Activated CD4-positive, alpha-beta T cell treated with anti-CD3 and anti-CD28 coated beads for 36 hours (primary cell): ENCODE measurements at regions of chr5 and their contacts with region 1.

Region 1: DNA sequence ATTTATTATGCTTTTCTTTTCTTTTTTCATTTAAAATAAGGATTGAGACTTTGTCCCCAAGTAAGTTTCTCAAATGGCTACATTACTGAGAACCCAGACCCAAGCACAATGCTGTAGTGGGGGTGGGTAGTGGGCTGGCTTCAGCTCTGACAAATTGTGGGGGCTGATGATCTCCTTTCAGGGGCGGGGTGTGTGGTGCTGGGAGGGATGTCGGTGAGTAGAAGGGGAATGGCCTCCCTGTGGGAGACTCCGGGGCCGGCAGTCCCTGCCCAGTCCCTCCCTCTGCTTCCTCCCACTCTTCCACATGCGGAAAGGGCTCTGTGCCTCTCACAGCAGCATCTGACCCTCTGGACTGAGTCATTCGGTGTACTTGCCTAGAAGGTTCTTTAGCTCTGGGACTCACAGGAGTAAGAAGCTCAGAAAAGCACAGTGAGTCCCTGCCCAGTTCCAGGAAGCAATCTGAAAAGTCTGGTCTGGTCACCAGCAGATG is 14.3 kb downstream of the CD180 start:
- DNase-seq: no peak
- ATAC-seq: peak; percentile 30
- H3K4me3 Mint-ChIP-seq: no peak overlapping the region
- H3K27ac Mint-ChIP-seq: no peak overlapping the region
- H3K4me1 Mint-ChIP-seq: peaks cover 37% of the 10 kb centered on the region
- H3K27me3 Mint-ChIP-seq: no peaks in the 10 kb centered on the region

Region 2: GRCh38 chr5:67133776-67134175 is 48.6 kb before region 1 on chr5:
- CTCF ChIA-PET with region 1: no interaction called
- POLR2A ChIA-PET with region 1: no interaction called
- intact Hi-C with region 1: loop called in 1 of 2 experiments (anchors 1 kb)
- DNase-seq: no peak
- ATAC-seq: no peak
- H3K4me3 Mint-ChIP-seq: no peak overlapping the region
- H3K27ac Mint-ChIP-seq: no peak overlapping the region
- H3K4me1 Mint-ChIP-seq: no peaks in the 10 kb centered on the region
- H3K27me3 Mint-ChIP-seq: no peaks in the 10 kb centered on the region

Region 3: GRCh38 chr5:67200809-67201562 is 18.6 kb after region 1 on chr5:
- CTCF ChIA-PET with region 1: interaction called, 3 read pairs
- POLR2A ChIA-PET with region 1: no interaction called
- intact Hi-C with region 1: loop called in 1 of 2 experiments (anchors 2 kb)
- DNase-seq: no peak
- ATAC-seq: no peak
- H3K4me3 Mint-ChIP-seq: no peak overlapping the region
- H3K27ac Mint-ChIP-seq: no peak overlapping the region
- H3K4me1 Mint-ChIP-seq: peaks cover 67% of the 10 kb centered on the region
- H3K27me3 Mint-ChIP-seq: no peaks in the 10 kb centered on the region

Region 4: DNA sequence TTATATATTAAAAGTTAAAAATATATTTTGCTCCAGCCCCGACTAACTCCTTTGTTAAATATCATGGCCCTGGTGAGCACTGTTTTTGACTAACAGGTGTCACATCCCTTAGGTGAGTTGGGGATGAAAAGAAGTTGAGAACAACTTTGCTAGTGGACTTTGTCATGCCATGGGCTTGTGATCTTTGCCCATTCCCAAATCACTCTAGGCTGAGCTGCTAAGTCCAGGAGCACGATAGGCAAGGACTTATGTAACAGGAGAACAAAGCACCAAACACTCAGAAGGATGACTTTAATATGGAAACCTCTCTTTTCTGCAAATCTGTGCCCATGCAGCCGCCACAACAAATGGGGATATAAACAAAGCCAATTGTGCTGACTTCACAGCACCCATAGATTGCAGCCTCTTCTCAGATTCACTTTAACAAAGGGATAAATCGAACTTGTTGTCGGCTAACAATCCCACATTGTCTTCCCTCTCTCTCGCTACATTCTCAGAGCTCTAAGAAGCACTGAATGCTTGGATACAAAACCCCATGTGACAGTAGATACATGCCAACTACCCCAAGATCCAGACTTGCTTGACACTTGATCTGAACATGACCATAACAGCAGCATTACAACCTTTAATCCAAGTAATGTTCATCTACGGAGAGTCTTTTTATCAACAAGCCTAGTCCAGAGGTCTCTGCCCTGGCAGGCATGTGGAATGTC is 101.1 kb after region 1 on chr5:
- CTCF ChIA-PET with region 1: no interaction called
- POLR2A ChIA-PET with region 1: no interaction called
- intact Hi-C with region 1: no loop called
- DNase-seq: no peak
- ATAC-seq: no peak
- H3K4me3 Mint-ChIP-seq: no peak overlapping the region
- H3K27ac Mint-ChIP-seq: no peak overlapping the region
- H3K4me1 Mint-ChIP-seq: no peaks in the 10 kb centered on the region
- H3K27me3 Mint-ChIP-seq: no peaks in the 10 kb centered on the region